ENCODE measurements at regions of chr2 and their contacts with region 1.

Region 1: GRCh38 chr2:47386551-47386950 is 16.4 kb upstream of the MSH2 start:
- DNase-seq: no peak
- ATAC-seq: no peak
- H3K4me3 ChIP-seq: no peak overlapping the region
- H3K4me3 Mint-ChIP-seq: no peak overlapping the region
- H3K27ac ChIP-seq: no peak overlapping the region
- H3K27ac Mint-ChIP-seq: no peak overlapping the region
- H3K4me1 ChIP-seq: no peaks in the 10 kb centered on the region
- H3K4me1 Mint-ChIP-seq: peaks cover 0 to 4% (median 0%) of the 10 kb centered on the region in 7 donors
- H3K27me3 ChIP-seq: no peaks in the 10 kb centered on the region
- H3K27me3 Mint-ChIP-seq: peaks cover 0 to 20% (median 0%) of the 10 kb centered on the region in 5 donors

Region 2: GRCh38 chr2:47336259-47337238 is 50.0 kb before region 1 on chr2:
- CTCF ChIA-PET with region 1: interaction called, 9 read pairs
- POLR2A ChIA-PET with region 1: no interaction called
- intact Hi-C with region 1: loop called (anchors 1 kb)
- DNase-seq: no peak
- ATAC-seq: peak; percentile 63
- H3K4me3 ChIP-seq: no peak overlapping the region
- H3K4me3 Mint-ChIP-seq: no peak overlapping the region
- H3K27ac ChIP-seq: no peak overlapping the region
- H3K27ac Mint-ChIP-seq: peak overlapping the region in 1 of 9 donors; percentile 73
- H3K4me1 ChIP-seq: no peaks in the 10 kb centered on the region
- H3K4me1 Mint-ChIP-seq: peaks cover 0 to 4% (median 0%) of the 10 kb centered on the region in 7 donors
- H3K27me3 ChIP-seq: no peaks in the 10 kb centered on the region
- H3K27me3 Mint-ChIP-seq: peaks cover 0 to 18% (median 5%) of the 10 kb centered on the region in 5 donors

Region 3: GRCh38 chr2:47631792-47632398 is 245.3 kb after region 1 on chr2:
- CTCF ChIA-PET with region 1: no interaction called
- POLR2A ChIA-PET with region 1: no interaction called
- intact Hi-C with region 1: no loop called
- DNase-seq: no peak
- ATAC-seq: no peak
- H3K4me3 ChIP-seq: no peak overlapping the region
- H3K4me3 Mint-ChIP-seq: no peak overlapping the region
- H3K27ac ChIP-seq: no peak overlapping the region
- H3K27ac Mint-ChIP-seq: no peak overlapping the region
- H3K4me1 ChIP-seq: no peaks in the 10 kb centered on the region
- H3K4me1 Mint-ChIP-seq: no peaks in the 10 kb centered on the region
- H3K27me3 ChIP-seq: no peaks in the 10 kb centered on the region
- H3K27me3 Mint-ChIP-seq: peaks cover 0 to 13% (median 0%) of the 10 kb centered on the region in 5 donors